AG04449 (cell line): ENCODE measurements at regions of chr4 and their contacts with region 1.

Region 1: GRCh38 chr4:139619644-139620043 is 46.0 kb upstream of the MGST2 start:
- DNase-seq: no peak
- H3K4me3 ChIP-seq: no peak overlapping the region
- CTCF ChIP-seq: peak; percentile 55

Region 2: DNA sequence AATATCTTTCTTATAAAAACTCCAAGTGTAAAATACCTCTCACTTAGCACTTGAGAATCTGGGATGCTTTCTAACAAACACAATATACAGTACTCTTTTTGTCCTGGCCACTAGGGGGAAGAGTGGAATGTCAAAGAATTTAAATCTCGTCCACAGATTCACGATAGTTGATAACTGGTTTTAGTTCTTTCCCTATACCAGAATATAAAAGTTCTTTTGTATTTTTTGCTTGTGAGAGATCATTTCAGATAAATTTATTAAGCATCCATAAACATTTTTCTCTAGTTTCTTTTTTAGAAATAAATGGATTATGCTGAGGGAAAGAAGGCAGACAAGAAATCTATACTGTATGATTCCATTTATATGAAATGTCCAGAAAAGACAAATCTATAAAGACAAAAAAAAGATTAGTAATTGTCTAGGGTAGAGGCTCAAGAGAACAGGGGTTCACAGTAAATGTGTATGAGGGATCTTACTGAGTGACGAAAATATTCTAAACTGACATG is 390.1 kb before region 1 on chr4:
- CTCF ChIA-PET with region 1: no interaction called
- POLR2A ChIA-PET with region 1: no interaction called
- DNase-seq: no peak
- H3K4me3 ChIP-seq: no peak overlapping the region
- CTCF ChIP-seq: peak; percentile 47

Region 3: DNA sequence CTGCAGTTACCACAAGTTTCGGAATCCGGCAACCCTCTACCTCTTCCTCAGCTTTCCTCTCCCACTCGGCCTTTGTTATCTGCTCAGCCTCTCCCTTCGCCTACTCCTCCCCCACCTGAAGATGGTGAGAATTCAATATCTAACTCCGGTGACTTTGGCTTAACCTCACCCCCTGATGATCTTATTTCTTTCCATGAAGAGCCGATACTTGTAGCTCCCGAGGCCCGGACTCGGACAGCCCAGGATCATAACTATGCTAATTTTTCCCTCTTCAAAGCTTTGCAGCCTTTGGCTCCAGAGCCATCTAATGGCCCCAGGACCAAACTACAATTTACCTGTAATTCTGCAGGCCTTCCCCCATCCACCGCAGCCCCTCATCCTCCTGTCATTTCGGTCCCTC is 14.0 kb after region 1 on chr4:
- CTCF ChIA-PET with region 1: interaction called, 38 read pairs
- POLR2A ChIA-PET with region 1: no interaction called
- DNase-seq: no peak
- H3K4me3 ChIP-seq: no peak overlapping the region
- CTCF ChIP-seq: peak; percentile 41

Region 4: DNA sequence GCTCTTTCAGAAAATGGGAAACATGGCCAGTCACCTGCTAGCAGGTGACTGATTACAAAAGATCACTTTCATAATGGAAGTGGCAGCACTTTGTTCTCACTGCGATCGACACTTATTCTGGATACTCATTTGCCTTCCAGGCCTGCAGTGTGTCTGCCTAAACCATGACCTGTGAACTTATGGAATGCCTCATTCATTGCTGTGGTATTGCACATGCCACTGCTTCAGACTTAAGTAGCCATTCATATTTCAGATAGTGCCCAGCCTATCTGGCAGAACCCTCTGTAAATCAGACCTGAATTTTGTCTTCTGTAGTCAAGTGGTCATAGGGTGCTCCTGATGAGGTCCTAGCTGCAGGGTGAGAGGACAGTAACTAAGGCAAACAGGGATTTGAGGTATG is 22.7 kb after region 1 on chr4:
- CTCF ChIA-PET with region 1: interaction called, 23 read pairs
- POLR2A ChIA-PET with region 1: no interaction called
- DNase-seq: peak; percentile 51
- H3K4me3 ChIP-seq: no peak overlapping the region
- CTCF ChIP-seq: no peak

Region 5: DNA sequence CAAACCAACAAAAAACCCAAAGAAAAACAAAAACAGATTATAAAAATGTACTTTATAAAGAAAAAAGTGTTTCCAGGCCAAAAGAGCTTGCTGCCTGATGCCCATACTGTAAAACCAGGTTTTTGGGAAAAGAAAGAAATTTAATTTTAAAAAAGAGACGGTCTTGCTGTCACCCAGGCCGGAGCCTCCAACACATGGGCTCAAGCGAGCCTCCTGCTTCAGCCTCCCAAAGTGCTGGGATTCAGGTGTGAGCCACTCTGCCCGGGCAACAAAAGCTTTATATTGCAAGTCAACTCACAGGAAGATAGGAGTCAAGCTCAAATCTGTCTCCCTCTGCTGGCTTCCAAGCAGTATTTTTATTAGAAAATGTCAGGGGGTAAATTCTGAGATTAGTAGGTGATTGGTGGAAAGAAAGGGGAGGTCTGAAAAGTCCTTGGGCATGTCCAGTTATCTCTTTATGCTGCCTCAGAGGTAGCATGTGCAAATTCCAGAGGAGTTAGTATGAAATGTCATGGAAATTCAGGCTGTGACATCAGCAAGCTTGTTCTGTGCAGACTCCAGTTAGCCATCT is 85.4 kb after region 1 on chr4:
- CTCF ChIA-PET with region 1: no interaction called
- POLR2A ChIA-PET with region 1: no interaction called
- DNase-seq: no peak
- H3K4me3 ChIP-seq: no peak overlapping the region
- CTCF ChIP-seq: no peak